CD4-positive, alpha-beta memory T cell (primary cell): ENCODE measurements at regions of chr1 and their contacts with region 1.

Region 1: DNA sequence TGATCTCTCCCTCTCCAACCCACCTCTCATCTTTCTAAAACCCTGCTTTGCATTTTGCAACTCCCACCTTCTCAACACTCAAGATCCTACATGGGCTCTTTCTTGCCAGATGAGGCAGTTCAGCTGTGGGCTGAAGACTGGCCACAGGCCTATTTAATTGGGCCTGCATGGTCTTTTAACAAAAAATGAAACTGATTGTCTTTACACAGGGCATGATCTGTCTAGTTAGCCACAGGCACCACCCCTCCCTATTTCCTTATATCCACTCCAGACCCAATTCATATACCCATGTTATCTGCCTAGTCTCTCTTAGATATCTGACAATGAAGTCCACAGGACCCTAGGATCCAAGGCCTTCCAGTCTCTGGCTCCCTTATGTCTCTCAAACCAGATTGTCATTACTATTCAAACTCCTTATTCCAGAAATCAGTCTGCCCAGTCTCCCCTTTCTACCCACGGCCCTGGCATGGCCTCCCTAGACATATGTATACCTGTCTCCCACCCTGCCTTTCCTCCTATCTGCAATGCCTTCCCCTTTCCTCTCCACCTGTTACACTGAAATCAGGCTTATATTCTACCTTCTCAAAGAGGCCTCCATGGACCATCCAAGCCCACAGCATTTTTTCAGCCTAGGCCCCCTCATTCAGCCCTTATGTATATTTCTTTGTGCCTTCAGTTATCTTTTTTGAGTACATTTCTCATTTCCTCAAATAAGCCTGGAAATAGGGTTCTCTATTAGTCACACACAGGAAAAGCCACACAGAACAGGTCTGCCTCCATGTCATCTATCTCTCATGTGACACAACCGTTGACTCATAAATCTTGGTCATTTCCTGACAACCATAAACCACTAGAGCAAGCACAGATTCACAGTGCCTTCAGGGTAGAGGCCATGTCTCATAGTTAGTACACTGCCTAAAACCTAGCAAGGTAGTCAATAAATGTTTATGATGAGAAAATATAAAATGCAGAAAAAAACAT is 39.0 kb downstream of the LPAR3 start:
- DNase-seq: peak; percentile 58 to 77 (median 64)
- H3K4me3 ChIP-seq: no peak overlapping the region
- H3K4me3 Mint-ChIP-seq: peak overlapping the region in 5 of 8 donors; percentile 7 to 75 (median 27)
- H3K27ac ChIP-seq: peak overlapping the region; percentile 48
- H3K27ac Mint-ChIP-seq: peak overlapping the region; percentile 86 to 96 (median 93)
- H3K4me1 ChIP-seq: peaks cover 20% of the 10 kb centered on the region
- H3K4me1 Mint-ChIP-seq: peaks cover 26 to 37% (median 31%) of the 10 kb centered on the region in 4 donors
- H3K27me3 ChIP-seq: no peaks in the 10 kb centered on the region
- H3K27me3 Mint-ChIP-seq: peaks cover 0 to 1% of the 10 kb centered on the region in 2 donors

Region 2: DNA sequence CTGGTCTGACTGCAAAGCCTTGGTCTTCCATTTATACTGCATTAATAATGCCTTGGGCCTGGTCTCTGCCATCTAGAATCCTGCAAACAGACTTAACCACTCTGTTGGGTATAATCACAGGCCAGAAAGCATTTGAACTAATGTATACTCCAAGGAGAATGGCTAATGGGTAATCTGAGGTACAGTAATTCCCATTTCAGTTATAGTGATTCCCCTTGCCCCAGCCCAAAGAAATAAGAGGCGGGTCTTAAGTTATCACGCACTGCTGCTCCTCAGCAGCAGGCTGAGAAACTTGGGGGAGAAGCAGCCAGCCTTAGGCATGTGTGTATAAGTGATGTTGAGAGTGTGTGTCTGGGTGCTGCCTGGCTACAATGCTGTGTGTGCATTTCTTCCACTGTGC is 36.5 kb after region 1 on chr1:
- CTCF ChIA-PET with region 1: no interaction called
- POLR2A ChIA-PET with region 1: no interaction called
- intact Hi-C with region 1: loop called (anchors 2 kb)
- DNase-seq: no peak
- H3K4me3 ChIP-seq: no peak overlapping the region
- H3K4me3 Mint-ChIP-seq: peak overlapping the region in 2 of 8 donors; percentile 11 to 13
- H3K27ac ChIP-seq: no peak overlapping the region
- H3K27ac Mint-ChIP-seq: peak overlapping the region in 1 of 7 donors; percentile 34
- H3K4me1 ChIP-seq: peaks cover 26% of the 10 kb centered on the region
- H3K4me1 Mint-ChIP-seq: peaks cover 19 to 53% (median 28%) of the 10 kb centered on the region in 4 donors
- H3K27me3 ChIP-seq: no peaks in the 10 kb centered on the region
- H3K27me3 Mint-ChIP-seq: peaks cover 14 to 26% of the 10 kb centered on the region in 2 donors

Region 3: DNA sequence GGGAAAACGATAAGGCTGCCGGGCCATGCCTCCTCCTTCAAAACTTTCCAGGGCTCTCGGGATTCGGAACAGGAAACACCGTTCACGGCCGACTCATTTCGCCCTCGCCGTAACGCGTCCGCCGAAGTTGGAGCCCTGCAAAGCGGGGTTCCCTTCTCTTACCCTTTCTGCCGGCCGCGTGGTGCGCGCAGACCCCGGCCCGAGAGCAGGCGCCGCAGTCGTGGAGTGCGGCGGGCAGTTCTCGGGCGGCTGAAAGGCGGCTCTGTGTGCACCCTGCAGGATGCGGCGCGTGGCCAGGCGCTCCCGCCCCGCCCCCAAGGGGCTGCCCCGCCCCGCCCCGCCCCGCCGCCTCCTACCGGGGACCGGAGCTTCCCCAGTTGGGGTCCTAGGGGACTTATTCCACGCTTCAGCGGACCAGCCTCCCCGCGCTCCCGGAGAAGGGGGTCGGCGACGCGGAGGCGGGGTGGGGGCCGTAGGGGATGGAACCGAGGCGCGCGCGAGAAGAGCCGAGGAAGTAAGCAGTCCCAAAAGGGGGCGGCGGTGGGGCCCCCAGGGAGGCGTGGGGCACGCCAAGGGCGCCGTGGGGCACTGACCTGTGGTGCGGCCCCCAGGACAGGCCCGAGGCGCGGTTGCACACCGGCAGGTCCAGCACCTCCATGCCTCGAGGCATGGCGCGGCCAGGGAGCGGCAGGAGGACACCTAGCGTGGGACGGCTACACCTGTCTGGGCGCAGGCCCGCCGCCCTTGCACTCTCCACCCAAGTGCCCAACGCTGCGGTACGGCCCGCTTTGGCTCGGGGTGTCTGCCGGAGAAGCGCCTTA is 143.0 kb after region 1 on chr1 and contains the start of gene MCOLN2:
- CTCF ChIA-PET with region 1: no interaction called
- POLR2A ChIA-PET with region 1: no interaction called
- intact Hi-C with region 1: loop called (anchors 1 kb)
- DNase-seq: peak; percentile 42 to 58 (median 52)
- H3K4me3 ChIP-seq: peak within 1 kb of the TSS; percentile 82 to 86
- H3K4me3 Mint-ChIP-seq: peak within 1 kb of the TSS; percentile 81 to 98 (median 89)
- H3K27ac ChIP-seq: peak within 1 kb of the TSS; percentile 50
- H3K27ac Mint-ChIP-seq: peak within 1 kb of the TSS; percentile 51 to 88 (median 76)
- H3K4me1 ChIP-seq: peaks cover 56% of the 10 kb centered on the region
- H3K4me1 Mint-ChIP-seq: peaks cover 30 to 67% (median 39%) of the 10 kb centered on the region in 4 donors
- H3K27me3 ChIP-seq: peaks cover 4% of the 10 kb centered on the region
- H3K27me3 Mint-ChIP-seq: peaks cover 3 to 17% of the 10 kb centered on the region in 2 donors
- total RNA-seq, gene MCOLN2: 16.8 to 20.3 TPM

Region 4: GRCh38 chr1:85042413-85042812 is 188.4 kb after region 1 on chr1:
- CTCF ChIA-PET with region 1: no interaction called
- POLR2A ChIA-PET with region 1: no interaction called
- intact Hi-C with region 1: no loop called
- DNase-seq: no peak
- H3K4me3 ChIP-seq: no peak overlapping the region
- H3K4me3 Mint-ChIP-seq: no peak overlapping the region
- H3K27ac ChIP-seq: no peak overlapping the region
- H3K27ac Mint-ChIP-seq: no peak overlapping the region
- H3K4me1 ChIP-seq: peaks cover 2% of the 10 kb centered on the region
- H3K4me1 Mint-ChIP-seq: peaks cover 0 to 7% (median 3%) of the 10 kb centered on the region in 4 donors
- H3K27me3 ChIP-seq: peaks cover 10% of the 10 kb centered on the region
- H3K27me3 Mint-ChIP-seq: peaks cover 8 to 33% of the 10 kb centered on the region in 2 donors

Region 5: GRCh38 chr1:86395771-86396497 is 1541.9 kb after region 1 on chr1 and contains the start of gene ODF2L:
- CTCF ChIA-PET with region 1: no interaction called
- POLR2A ChIA-PET with region 1: no interaction called
- intact Hi-C with region 1: loop called (anchors 5 kb)
- DNase-seq: peak; percentile 90 to 94 (median 92)
- H3K4me3 ChIP-seq: peak within 1 kb of the TSS; percentile 77 to 87
- H3K4me3 Mint-ChIP-seq: peak within 1 kb of the TSS; percentile 94 to 99 (median 98)
- H3K27ac ChIP-seq: peak within 1 kb of the TSS; percentile 92
- H3K27ac Mint-ChIP-seq: peak within 1 kb of the TSS; percentile 97 to 100 (median 99)
- H3K4me1 ChIP-seq: peaks cover 56% of the 10 kb centered on the region
- H3K4me1 Mint-ChIP-seq: peaks cover 43 to 68% (median 51%) of the 10 kb centered on the region in 4 donors
- H3K27me3 ChIP-seq: no peaks in the 10 kb centered on the region
- H3K27me3 Mint-ChIP-seq: no peaks in the 10 kb centered on the region
- total RNA-seq, gene ODF2L: 97.3 to 98.3 TPM